Calu3 (cell line): ENCODE measurements at regions of chr3 and their contacts with region 1.

Region 1: GRCh38 chr3:40580494-40581091 is 55.8 kb downstream of the ZNF621 start:
- DNase-seq: peak; percentile 67
- H3K4me3 Mint-ChIP-seq: no peak overlapping the region
- H3K27ac Mint-ChIP-seq: no peak overlapping the region
- H3K4me1 Mint-ChIP-seq: no peaks in the 10 kb centered on the region
- H3K27me3 Mint-ChIP-seq: peaks cover 55% of the 10 kb centered on the region
- CTCF ChIP-seq: peak; percentile 86

Region 2: DNA sequence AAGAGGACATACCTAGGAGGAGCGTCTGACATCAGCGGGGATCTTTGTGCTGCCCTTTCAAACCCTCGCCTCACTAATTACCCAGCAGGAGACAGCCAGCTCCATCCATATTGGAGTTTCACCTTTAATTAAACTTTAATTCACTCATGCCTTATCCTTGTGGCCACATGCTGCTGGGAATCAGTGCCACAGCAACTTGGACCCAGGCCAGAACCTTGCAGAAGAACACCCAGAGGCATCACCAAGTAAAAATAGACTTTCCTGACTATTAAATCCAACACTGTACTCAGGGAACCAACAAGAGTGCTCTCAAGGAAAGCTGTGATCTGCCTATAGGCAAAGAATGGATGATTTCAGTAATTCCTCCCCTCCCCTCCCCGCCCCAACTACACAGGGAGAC is 247.2 kb before region 1 on chr3:
- CTCF ChIA-PET with region 1: no interaction called
- intact Hi-C with region 1: loop called (anchors 5 kb)
- DNase-seq: no peak
- H3K4me3 Mint-ChIP-seq: no peak overlapping the region
- H3K27ac Mint-ChIP-seq: no peak overlapping the region
- H3K4me1 Mint-ChIP-seq: no peaks in the 10 kb centered on the region
- H3K27me3 Mint-ChIP-seq: no peaks in the 10 kb centered on the region
- CTCF ChIP-seq: no peak

Region 3: DNA sequence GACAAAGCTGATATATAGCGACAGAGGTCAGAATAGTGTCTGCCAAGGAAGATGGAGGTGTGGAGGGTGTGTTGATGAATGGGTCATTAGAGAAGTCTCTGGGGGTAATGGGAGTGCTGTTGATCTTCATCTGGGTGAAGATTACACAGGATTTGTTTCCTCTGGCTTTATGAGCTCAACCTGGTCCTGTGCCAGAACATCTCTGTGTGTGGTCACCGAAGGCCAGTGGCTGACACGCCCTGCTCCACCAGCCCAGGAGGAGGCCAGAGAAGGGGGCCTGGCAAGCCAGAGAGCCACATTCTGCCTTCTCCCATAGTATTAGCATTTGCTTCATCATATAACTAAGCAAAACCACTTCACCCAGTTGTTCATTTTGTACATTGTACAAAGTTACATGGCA is 65.3 kb after region 1 on chr3:
- CTCF ChIA-PET with region 1: no interaction called
- intact Hi-C with region 1: no loop called
- DNase-seq: no peak
- H3K4me3 Mint-ChIP-seq: no peak overlapping the region
- H3K27ac Mint-ChIP-seq: no peak overlapping the region
- H3K4me1 Mint-ChIP-seq: no peaks in the 10 kb centered on the region
- H3K27me3 Mint-ChIP-seq: no peaks in the 10 kb centered on the region
- CTCF ChIP-seq: no peak

Region 4: DNA sequence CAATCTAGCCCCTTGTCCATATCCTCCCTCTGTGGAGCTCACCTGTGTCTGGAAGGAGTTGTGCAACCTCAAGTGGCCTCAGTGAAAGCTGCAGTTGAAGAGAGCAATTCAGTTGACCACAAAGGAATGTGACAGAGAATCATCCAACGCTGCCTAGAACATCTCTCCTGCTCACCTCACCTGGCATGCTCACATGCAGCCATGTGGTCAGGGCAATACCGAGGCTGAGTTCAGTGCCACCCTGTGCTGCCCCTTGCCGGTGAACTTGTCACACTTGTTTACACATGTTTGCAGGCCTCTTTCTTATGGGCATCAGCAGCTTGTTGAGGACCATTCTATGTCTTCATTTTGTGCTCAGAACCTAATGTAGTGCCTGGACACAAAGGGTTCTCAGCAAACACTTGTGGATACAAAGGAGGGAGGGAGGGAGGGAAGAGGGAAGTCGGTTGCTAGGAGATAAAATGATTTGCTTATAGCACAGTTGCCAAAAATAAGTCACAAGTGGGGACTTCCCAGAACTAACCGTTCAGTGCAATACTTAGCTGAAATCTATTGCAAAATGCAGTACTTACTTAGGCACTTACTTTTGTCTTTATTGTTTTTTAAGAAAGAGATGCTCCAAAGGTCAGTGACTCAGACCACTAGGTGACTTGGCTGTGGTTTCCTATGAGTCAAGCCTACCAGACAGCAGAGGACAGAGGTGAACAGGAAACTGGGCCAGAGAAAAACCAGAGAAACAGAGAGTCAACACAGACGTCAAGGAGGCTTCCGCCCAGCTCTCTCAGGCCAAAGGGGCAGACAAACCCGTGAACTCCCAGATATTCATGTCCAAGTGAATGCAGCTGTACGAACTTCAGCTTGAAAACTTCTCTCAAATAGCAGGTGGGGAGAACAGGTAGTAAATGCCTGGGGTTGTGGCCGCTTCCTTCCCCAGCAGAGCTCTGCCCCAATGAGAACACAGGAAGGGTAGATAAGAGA is 390.9 kb after region 1 on chr3:
- CTCF ChIA-PET with region 1: no interaction called
- intact Hi-C with region 1: loop called (anchors 2 kb)
- DNase-seq: peak; percentile 63
- H3K4me3 Mint-ChIP-seq: no peak overlapping the region
- H3K27ac Mint-ChIP-seq: peak overlapping the region; percentile 91
- H3K4me1 Mint-ChIP-seq: peaks cover 19% of the 10 kb centered on the region
- H3K27me3 Mint-ChIP-seq: no peaks in the 10 kb centered on the region
- CTCF ChIP-seq: no peak

Region 5: GRCh38 chr3:41199866-41200668 is 619.5 kb after region 1 on chr3:
- CTCF ChIA-PET with region 1: no interaction called
- intact Hi-C with region 1: loop called (anchors 5 kb)
- DNase-seq: peak; percentile 23
- H3K4me3 Mint-ChIP-seq: peak overlapping the region; percentile 88
- H3K27ac Mint-ChIP-seq: peak overlapping the region; percentile 85
- H3K4me1 Mint-ChIP-seq: peaks cover 21% of the 10 kb centered on the region
- H3K27me3 Mint-ChIP-seq: no peaks in the 10 kb centered on the region
- CTCF ChIP-seq: no peak

Region 6: GRCh38 chr3:41716471-41716870 is 1135.9 kb after region 1 on chr3:
- CTCF ChIA-PET with region 1: interaction called, 3 read pairs
- intact Hi-C with region 1: loop called (anchors 5 kb)
- DNase-seq: no peak
- H3K4me3 Mint-ChIP-seq: no peak overlapping the region
- H3K27ac Mint-ChIP-seq: no peak overlapping the region
- H3K4me1 Mint-ChIP-seq: no peaks in the 10 kb centered on the region
- H3K27me3 Mint-ChIP-seq: no peaks in the 10 kb centered on the region
- CTCF ChIP-seq: no peak

Region 7: DNA sequence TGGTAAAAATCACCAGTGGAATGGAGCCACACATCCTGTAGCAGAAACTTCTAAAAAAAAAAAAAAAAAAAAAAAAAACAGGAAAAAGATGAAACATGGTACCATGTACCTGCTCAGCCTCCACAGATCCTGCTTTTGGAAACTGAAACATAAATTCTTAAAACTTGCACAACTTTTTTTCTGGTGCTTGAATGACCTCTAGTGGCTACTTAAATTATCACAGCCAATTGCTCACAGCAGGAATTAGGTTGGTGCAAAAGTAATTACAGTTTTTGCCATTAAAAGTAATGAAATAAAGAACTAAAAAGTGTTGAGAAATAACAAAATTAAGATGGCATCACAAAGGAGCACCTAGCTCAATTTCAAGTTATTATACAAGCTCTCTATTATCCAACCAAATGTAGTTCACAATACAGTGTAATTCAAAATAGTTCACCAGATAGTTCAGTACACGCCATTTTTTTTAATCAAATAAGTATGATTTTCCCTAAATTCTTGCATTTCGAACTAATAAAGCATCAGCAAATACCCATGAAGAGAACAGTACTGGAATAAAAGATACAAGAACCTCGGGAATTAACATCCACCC is 1300.7 kb after region 1 on chr3:
- CTCF ChIA-PET with region 1: no interaction called
- intact Hi-C with region 1: loop called (anchors 1 kb)
- DNase-seq: peak; percentile 12
- H3K4me3 Mint-ChIP-seq: no peak overlapping the region
- H3K27ac Mint-ChIP-seq: no peak overlapping the region
- H3K4me1 Mint-ChIP-seq: no peaks in the 10 kb centered on the region
- H3K27me3 Mint-ChIP-seq: no peaks in the 10 kb centered on the region
- CTCF ChIP-seq: peak; percentile 30